Common myeloid progenitor, CD34-positive (primary cell): ENCODE measurements at regions of chr7 and their contacts with region 1.

Region 1: GRCh38 chr7:20778063-20778721 is 8.5 kb downstream of the SP8 start:
- DNase-seq: peak in 2 of 3 donors; percentile 50 to 60
- H3K4me3 ChIP-seq: peak overlapping the region in 4 of 7 experiments; percentile 46 to 63 (median 56)
- H3K27ac ChIP-seq: no peak overlapping the region
- H3K4me1 ChIP-seq: peaks cover 0 to 12% (median 11%) of the 10 kb centered on the region in 4 experiments
- H3K27me3 ChIP-seq: peaks cover 32 to 94% (median 59%) of the 10 kb centered on the region in 5 experiments

Region 2: DNA sequence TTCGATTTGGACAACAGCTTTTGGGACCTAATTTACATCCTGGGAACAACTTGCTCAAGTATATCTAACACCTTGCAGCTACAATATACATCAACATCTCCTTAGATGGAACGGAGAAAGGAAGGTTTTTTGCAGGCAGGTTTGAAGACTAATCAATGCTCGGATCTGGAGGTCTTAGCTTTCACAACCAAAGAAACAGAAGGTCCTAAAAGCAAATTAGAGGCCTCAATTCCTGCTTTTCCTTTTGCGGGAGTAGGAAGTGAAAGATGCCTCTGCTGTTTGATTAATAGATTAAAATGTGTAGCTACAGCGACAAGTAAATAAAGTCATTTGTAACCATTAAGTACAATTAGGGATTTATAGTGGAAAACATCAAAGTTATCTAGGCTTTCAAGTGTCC is 12.2 kb after region 1 on chr7:
- CTCF ChIA-PET with region 1: interaction called, 37 read pairs
- POLR2A ChIA-PET with region 1: no interaction called
- DNase-seq: peak in 1 of 3 donors; percentile 17
- H3K4me3 ChIP-seq: no peak overlapping the region
- H3K27ac ChIP-seq: no peak overlapping the region
- H3K4me1 ChIP-seq: peaks cover 0 to 22% (median 16%) of the 10 kb centered on the region in 4 experiments
- H3K27me3 ChIP-seq: peaks cover 41 to 100% (median 72%) of the 10 kb centered on the region in 5 experiments

Region 3: GRCh38 chr7:20798081-20798693 is 20.0 kb after region 1 on chr7:
- CTCF ChIA-PET with region 1: interaction called, 37 read pairs
- POLR2A ChIA-PET with region 1: no interaction called
- DNase-seq: peak in 1 of 3 donors; percentile 38
- H3K4me3 ChIP-seq: peak overlapping the region in 5 of 7 experiments; percentile 40 to 73 (median 48)
- H3K27ac ChIP-seq: no peak overlapping the region
- H3K4me1 ChIP-seq: peaks cover 0 to 15% (median 11%) of the 10 kb centered on the region in 4 experiments
- H3K27me3 ChIP-seq: peaks cover 41 to 84% (median 56%) of the 10 kb centered on the region in 5 experiments

Region 4: DNA sequence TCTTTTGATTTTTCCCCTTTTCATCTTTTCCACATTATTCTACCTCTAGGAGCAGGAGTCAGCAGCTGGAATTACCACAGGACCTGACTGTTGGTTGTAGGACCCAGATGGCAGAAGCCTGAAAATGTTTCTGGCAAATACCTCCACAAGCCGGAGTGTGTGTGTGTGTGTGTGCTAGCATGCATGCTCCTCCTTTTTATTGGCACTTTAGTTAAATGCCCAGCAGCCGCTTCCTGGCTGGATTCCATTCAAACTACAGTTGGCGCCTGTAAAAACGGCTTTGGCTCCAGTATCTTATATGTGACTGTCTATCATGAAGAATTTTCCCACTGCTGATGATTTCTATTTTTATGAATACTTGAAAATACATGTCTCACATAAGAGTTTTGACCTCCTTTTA is 330.0 kb after region 1 on chr7:
- CTCF ChIA-PET with region 1: no interaction called
- POLR2A ChIA-PET with region 1: no interaction called
- DNase-seq: no peak
- H3K4me3 ChIP-seq: no peak overlapping the region
- H3K27ac ChIP-seq: no peak overlapping the region
- H3K4me1 ChIP-seq: no peaks in the 10 kb centered on the region
- H3K27me3 ChIP-seq: no peaks in the 10 kb centered on the region